ENCODE measurements at regions of chr5 and their contacts with region 1.

Region 1: GRCh38 chr5:82165740-82166530 is 112.2 kb downstream of the RPS23 start:
- DNase-seq: peak; percentile 27
- ATAC-seq: peak; percentile 93
- H3K4me3 Mint-ChIP-seq: no peak overlapping the region
- H3K27ac Mint-ChIP-seq: peak overlapping the region; percentile 74
- H3K4me1 Mint-ChIP-seq: peaks cover 43% of the 10 kb centered on the region
- H3K27me3 Mint-ChIP-seq: no peaks in the 10 kb centered on the region
- CTCF ChIP-seq: 0 out of 2 replicates have a peak, but pooled peaks have one; percentile 18

Region 2: DNA sequence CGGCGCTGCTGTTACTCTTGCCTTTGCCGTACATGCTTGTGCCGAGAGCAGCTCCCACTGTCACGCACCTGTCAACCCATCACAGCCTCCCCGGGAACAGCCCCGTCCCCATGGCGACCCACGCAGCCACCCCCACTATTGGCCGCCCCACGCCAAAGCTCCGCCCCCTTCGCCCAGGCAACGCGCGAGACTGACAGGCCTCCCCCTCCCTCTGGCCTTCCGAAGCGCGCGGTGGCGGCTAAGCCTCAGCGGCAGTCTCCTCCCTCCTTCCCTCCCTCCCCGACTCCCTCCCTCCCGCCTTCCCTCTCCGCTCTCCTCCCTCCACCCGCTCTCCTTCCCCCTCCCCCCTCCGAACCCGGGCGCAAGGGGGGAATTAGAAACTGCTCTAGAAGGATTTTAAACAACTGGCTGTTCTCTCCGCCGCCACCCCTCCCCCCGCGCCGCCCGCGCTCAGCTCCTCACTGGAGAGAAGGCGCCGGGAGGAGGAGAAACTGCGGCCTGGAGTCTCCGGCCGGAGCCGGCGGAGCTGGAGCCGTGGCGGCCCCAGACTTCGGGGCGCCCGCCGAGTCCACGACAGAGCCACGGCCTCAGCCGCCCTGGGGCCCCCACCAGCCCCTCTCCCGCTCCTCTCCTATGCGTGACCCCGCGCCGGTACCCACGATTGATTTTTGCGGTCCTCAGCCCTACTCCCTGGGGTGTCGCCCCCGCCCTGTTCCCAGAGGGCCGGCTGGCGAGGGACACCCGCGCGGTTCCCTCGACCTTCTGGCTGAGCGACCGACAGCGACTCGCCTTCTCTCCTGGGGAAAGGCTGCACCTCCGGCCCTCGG is 414.7 kb before region 1 on chr5 and contains the start of gene SSBP2:
- CTCF ChIA-PET with region 1: interaction called, 17 read pairs
- POLR2A ChIA-PET with region 1: no interaction called
- DNase-seq: peak; percentile 99
- ATAC-seq: peak; percentile 79
- H3K4me3 Mint-ChIP-seq: peak within 1 kb of the TSS; percentile 83
- H3K27ac Mint-ChIP-seq: 0 out of 2 replicates have a peak within 1 kb of the TSS, but pooled peaks have one; percentile 18
- H3K4me1 Mint-ChIP-seq: peaks cover 54% of the 10 kb centered on the region
- H3K27me3 Mint-ChIP-seq: peaks cover 21% of the 10 kb centered on the region
- CTCF ChIP-seq: no peak
- total RNA-seq, gene SSBP2: 24.9 to 29.7 TPM (median 27.8 TPM) in 3 replicates

Region 3: GRCh38 chr5:81851481-81852178 is 314.3 kb before region 1 on chr5:
- CTCF ChIA-PET with region 1: interaction called, 45 read pairs
- POLR2A ChIA-PET with region 1: interaction called, 4 read pairs
- DNase-seq: peak; percentile 96
- ATAC-seq: peak; percentile 85
- H3K4me3 Mint-ChIP-seq: peak overlapping the region; percentile 77
- H3K27ac Mint-ChIP-seq: peak overlapping the region; percentile 100
- H3K4me1 Mint-ChIP-seq: peaks cover 79% of the 10 kb centered on the region
- H3K27me3 Mint-ChIP-seq: no peaks in the 10 kb centered on the region
- CTCF ChIP-seq: no peak

Region 4: DNA sequence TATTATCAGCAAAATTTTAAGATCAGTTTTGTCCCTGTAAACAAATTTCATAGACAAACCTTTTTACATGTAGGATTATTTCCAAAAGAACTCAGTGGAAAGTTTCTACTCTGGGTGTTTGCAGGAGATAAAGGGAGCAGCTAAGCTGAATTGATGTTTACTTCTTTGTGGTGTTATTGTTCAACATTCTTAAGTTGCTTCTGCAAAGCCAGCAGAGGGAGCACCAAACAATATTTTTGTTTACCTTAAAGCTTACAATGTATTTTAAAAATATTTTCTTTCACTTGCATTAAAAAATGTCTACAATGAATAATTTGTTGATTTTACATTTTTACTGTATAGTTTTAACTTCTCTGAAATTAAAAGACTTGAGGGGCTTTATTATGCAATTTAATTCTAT is 58.7 kb before region 1 on chr5:
- CTCF ChIA-PET with region 1: interaction called, 29 read pairs
- POLR2A ChIA-PET with region 1: no interaction called
- DNase-seq: no peak
- ATAC-seq: no peak
- H3K4me3 Mint-ChIP-seq: no peak overlapping the region
- H3K27ac Mint-ChIP-seq: peak overlapping the region; percentile 52; the same call in 1 of the 2 replicates
- H3K4me1 Mint-ChIP-seq: peaks cover 25% of the 10 kb centered on the region
- H3K27me3 Mint-ChIP-seq: no peaks in the 10 kb centered on the region
- CTCF ChIP-seq: no peak

Measured in WTC11 (cell line).